ENCODE measurements at regions of chr19 and their contacts with region 1.

Region 1: DNA sequence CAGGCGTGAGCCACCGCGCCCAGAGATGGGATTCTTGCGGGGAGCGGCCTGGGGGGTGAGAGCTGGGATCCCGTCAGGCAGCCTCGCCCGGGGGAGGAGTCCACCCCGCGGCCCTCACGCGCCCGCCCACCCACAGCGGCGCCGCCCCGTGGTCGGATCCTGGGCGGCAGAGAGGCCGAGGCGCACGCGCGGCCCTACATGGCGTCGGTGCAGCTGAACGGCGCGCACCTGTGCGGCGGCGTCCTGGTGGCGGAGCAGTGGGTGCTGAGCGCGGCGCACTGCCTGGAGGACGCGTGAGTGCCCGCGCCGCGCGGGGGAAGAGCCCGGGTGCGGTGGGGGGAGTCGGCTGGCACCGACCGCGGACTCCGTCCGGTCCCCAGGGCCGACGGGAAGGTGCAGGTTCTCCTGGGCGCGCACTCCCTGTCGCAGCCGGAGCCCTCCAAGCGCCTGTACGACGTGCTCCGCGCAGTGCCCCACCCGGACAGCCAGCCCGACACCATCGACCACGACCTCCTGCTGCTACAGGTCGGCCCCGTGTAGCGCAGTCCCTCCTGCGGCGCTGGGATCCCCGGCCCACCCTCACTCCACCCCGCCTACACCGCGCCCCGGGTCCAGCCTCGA is 1.1 kb downstream of the CFD start:
- DNase-seq: peak; percentile 45
- H3K4me3 Mint-ChIP-seq: peak overlapping the region; percentile 27
- H3K27ac Mint-ChIP-seq: no peak overlapping the region
- H3K4me1 Mint-ChIP-seq: peaks cover 13% of the 10 kb centered on the region
- H3K27me3 Mint-ChIP-seq: peaks cover 6% of the 10 kb centered on the region

Region 2: GRCh38 chr19:771332-771785 is 89.2 kb before region 1 on chr19:
- CTCF ChIA-PET with region 1: interaction called, 5 read pairs
- intact Hi-C with region 1: loop called (anchors 1 kb)
- DNase-seq: peak; percentile 65
- H3K4me3 Mint-ChIP-seq: no peak overlapping the region
- H3K27ac Mint-ChIP-seq: no peak overlapping the region
- H3K4me1 Mint-ChIP-seq: peaks cover 3% of the 10 kb centered on the region
- H3K27me3 Mint-ChIP-seq: no peaks in the 10 kb centered on the region

Region 3: DNA sequence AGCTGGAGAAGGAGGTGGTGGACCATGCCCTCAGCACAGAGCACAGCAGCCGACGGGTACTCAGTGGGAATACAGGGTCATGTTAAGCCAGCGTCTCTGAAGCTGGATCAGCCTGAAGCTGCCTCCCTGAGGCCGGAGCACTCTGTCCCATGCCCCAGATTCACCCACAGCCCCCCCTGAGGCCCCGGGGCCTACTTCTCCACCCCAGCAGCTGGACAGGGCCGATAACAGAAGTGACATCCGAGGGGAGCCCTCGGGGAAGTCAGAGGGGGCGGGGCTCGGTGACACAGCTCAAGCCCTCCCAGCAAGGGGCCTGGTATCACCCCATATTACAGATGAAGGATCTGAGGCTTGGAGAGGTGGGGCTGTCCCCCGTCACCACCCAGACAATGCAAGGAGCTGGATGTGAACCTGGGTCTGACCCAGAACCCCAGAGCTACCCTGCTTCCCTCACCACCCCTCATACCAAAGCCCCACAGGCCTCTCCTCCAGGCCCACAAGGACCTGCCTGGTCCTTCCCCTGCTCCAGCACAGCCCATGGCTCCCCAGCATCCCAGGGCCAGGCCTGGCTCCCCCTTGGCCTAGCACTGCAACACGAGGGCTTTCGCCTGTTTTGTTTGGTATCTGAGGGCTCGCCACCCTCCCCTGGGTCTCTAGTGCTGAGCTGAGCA is 46.7 kb after region 1 on chr19:
- CTCF ChIA-PET with region 1: interaction called, 17 read pairs
- intact Hi-C with region 1: no loop called
- DNase-seq: peak; percentile 88
- H3K4me3 Mint-ChIP-seq: peak overlapping the region; percentile 41
- H3K27ac Mint-ChIP-seq: peak overlapping the region; percentile 97
- H3K4me1 Mint-ChIP-seq: peaks cover 72% of the 10 kb centered on the region
- H3K27me3 Mint-ChIP-seq: no peaks in the 10 kb centered on the region

Region 4: DNA sequence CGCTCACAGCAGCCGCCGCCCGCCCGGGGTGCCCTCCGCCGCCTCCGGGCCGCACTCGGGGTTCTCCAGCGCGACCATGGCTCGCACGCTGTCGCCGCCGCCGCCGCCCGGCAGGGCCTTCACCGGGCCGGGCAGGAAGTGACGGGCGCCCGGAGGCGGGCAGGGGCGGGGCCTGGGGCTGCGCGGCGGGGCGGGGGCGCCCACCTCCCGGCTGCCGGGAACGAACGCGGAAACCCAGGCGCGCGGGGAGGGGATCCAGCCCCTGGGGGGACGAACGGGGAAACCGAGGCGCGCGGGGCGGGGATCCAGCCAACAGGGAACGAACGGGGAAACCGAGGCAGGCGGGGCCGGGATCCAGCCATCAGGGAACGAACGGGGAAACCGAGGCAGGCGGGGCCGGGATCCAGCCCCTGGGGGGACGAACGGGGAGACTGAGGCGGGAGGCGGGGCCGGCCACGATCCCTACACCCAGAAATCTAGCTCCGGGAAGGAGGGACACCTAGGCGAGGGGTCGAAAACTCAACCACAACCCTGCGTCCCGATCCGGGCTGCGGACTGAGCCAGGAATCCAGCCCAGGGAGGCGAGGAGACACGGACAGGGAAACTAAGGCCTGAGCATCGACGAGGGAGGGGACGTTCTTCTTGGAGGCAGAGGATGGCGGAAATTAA is 52.6 kb after region 1 on chr19 and contains the start of gene R3HDM4:
- CTCF ChIA-PET with region 1: interaction called, 21 read pairs
- intact Hi-C with region 1: loop called (anchors 1 kb)
- DNase-seq: peak; percentile 88
- H3K4me3 Mint-ChIP-seq: peak within 1 kb of the TSS; percentile 84
- H3K27ac Mint-ChIP-seq: peak within 1 kb of the TSS; percentile 95
- H3K4me1 Mint-ChIP-seq: peaks cover 34% of the 10 kb centered on the region
- H3K27me3 Mint-ChIP-seq: peaks cover 2% of the 10 kb centered on the region
- total RNA-seq, gene R3HDM4: 111 to 120 TPM

Region 5: DNA sequence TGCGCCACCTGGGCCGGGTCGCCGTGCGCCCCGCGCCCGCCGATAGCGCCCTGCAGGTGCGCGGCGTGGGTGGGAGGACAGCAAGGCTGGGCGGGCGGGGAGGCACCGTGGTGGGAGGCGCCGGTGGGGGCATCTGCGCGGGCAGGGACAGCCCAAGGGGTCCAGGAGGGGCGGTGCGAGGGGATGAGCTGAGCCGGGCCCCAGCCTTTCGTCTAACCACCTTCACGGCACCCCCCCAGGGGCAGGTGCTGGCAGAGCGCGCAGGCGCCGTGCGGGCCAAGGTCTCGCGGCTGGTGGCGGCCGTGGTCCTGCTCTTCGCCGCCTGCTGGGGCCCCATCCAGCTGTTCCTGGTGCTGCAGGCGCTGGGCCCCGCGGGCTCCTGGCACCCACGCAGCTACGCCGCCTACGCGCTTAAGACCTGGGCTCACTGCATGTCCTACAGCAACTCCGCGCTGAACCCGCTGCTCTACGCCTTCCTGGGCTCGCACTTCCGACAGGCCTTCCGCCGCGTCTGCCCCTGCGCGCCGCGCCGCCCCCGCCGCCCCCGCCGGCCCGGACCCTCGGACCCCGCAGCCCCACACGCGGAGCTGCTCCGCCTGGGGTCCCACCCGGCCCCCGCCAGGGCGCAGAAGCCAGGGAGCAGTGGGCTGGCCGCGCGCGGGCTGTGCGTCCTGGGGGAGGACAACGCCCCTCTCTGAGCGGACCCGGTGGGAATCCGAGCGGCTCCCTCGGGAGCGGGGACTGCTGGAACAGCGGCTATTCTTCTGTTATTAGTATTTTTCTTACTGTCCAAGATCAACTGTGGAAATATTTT is 59.7 kb after region 1 on chr19:
- CTCF ChIA-PET with region 1: interaction called, 23 read pairs
- intact Hi-C with region 1: loop called (anchors 1 kb)
- DNase-seq: peak; percentile 63
- H3K4me3 Mint-ChIP-seq: peak overlapping the region; percentile 74
- H3K27ac Mint-ChIP-seq: peak overlapping the region; percentile 73
- H3K4me1 Mint-ChIP-seq: peaks cover 22% of the 10 kb centered on the region
- H3K27me3 Mint-ChIP-seq: peaks cover 2% of the 10 kb centered on the region

Region 6: GRCh38 chr19:984165-984967 is 123.8 kb after region 1 on chr19 and contains the start of gene WDR18:
- CTCF ChIA-PET with region 1: interaction called, 20 read pairs
- intact Hi-C with region 1: loop called (anchors 2 kb)
- DNase-seq: peak; percentile 94
- H3K4me3 Mint-ChIP-seq: peak within 1 kb of the TSS; percentile 92
- H3K27ac Mint-ChIP-seq: peak within 1 kb of the TSS; percentile 91
- H3K4me1 Mint-ChIP-seq: peaks cover 21% of the 10 kb centered on the region
- H3K27me3 Mint-ChIP-seq: no peaks in the 10 kb centered on the region
- total RNA-seq, gene WDR18: 77.8 to 82.0 TPM

Measured in activated naive CD4-positive, alpha-beta T cell treated with anti-CD3 and anti-CD28 coated beads for 36 hours (primary cell).